BJ (cell line): ENCODE measurements at regions of chr2 and their contacts with region 1.

Region 1: DNA sequence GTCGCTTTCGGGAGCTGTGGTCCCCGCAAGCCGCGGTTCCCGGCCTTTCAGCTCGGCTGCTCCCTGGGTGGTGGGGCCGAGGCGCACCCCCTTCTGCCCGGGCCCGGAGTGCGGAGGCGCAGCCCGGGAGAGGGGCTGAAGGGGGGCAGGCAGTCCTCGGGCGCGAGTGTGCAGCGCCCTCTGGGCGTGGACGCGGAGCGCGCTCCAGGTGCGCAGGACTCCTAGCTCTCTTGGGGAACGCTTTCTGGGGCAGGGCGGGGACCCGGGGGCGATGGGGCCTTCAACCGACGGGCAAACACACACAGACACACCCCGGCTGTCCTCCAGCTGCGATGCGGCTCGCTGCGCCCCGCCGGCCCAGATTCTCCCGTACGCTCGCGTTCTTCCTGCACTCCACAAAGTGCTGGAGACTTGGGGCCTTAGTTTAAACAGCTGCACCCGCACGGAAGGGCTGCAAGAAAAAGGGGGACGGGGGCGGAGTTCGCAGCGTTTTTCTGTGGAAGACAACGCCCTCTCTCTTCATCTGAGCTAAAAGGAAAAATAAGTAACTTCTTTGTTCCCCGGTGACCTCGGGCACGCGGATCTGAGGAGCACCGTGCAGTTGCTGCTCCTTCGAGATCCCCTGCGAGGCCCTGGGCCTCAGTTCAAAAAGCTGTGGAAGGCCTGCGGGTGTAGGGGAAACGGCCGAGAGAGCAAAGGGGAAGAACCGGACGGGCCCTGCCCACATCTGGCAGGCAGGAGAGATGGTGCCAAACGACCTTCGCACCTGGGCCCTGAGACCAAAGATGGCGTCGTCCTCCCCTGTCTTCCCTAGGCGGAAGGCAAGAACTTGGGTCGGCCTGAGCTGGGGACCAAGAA is 593 bp upstream of the SDC1 start:
- DNase-seq: no peak
- H3K4me3 ChIP-seq: peak overlapping the region; percentile 60
- H3K27me3 ChIP-seq: no peaks in the 10 kb centered on the region
- CTCF ChIP-seq: peak; percentile 71

Region 2: DNA sequence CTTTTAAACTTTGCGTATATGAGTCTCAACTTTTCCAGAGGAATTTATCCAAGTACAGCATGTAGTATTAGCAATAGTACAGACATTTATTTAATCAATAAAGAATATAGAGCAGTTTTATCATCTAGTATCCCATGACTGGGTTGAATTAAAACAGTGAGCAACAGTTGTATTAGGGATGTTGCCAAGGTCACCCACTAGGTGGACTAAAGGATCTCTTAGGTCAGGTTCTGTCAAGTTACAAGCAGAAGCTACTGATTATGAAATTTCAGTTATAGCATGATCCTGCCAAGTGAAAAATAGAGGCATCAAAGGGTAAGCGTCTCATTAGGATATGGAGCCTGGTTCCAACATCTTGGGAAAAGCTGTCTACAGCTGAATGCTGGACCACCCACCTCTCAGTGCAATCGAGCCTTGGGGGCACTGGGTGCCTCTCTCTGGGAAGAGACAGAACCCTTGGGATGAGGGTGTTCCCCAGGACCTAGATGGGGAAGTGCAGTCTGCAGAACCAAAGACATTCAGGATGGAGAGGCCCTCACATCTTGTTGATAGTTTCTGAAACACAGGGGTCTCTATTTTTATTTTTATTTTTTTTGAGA is 121.9 kb before region 1 on chr2:
- CTCF ChIA-PET with region 1: interaction called, 11 read pairs
- POLR2A ChIA-PET with region 1: no interaction called
- DNase-seq: no peak
- H3K4me3 ChIP-seq: no peak overlapping the region
- H3K27me3 ChIP-seq: no peaks in the 10 kb centered on the region; the same call in 1 of the 2 replicates
- CTCF ChIP-seq: peak; percentile 35

Region 3: GRCh38 chr2:20157193-20157891 is 68.2 kb before region 1 on chr2:
- CTCF ChIA-PET with region 1: no interaction called
- POLR2A ChIA-PET with region 1: no interaction called
- DNase-seq: no peak
- H3K4me3 ChIP-seq: no peak overlapping the region
- H3K27me3 ChIP-seq: no peaks in the 10 kb centered on the region
- CTCF ChIP-seq: no peak

Region 4: DNA sequence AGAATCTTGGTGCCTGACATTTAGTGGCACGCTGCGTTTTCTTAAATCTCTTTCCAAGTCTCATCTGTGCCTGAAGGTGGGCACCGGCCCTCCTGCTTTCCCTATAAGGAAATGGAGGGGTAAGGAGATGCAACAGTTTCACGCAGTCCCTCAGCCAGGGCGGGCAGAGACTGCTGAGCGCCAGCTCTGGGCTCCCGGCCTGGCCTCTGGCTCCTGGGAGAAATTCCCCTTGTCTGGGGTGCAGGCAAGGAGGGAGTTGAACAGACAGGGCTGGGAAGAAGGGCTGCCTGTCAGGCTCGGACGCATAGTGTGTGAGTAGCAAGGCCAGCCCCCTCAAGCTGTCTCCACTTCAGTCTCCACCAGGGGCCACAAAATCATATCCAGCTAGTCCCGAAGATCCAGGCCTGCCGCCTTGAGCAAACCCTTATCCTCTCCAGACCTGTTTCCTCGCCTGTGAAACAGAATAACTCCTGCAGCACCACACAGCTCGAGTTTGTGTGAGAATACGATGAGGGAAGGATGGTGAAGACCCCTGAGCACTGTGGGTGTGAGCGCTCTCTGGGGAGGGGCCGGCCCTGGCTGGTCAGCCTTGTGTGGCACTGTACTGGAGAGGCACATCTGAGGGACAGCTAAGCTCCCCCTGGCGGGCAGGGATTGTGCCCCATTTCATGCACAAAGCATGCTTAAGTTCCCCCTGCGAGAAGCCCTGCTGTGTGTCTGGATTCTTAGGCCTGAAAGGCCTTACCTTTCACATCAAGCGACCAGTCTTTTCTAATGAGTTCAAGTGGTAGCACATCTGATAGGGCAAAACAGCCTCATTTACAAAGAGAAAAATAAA is 34.4 kb before region 1 on chr2:
- CTCF ChIA-PET with region 1: interaction called, 11 read pairs
- POLR2A ChIA-PET with region 1: interaction called, 3 read pairs
- DNase-seq: no peak
- H3K4me3 ChIP-seq: no peak overlapping the region
- H3K27me3 ChIP-seq: no peaks in the 10 kb centered on the region
- CTCF ChIP-seq: peak; percentile 60